ENCODE measurements at regions of chr6 and their contacts with region 1.

Region 1: DNA sequence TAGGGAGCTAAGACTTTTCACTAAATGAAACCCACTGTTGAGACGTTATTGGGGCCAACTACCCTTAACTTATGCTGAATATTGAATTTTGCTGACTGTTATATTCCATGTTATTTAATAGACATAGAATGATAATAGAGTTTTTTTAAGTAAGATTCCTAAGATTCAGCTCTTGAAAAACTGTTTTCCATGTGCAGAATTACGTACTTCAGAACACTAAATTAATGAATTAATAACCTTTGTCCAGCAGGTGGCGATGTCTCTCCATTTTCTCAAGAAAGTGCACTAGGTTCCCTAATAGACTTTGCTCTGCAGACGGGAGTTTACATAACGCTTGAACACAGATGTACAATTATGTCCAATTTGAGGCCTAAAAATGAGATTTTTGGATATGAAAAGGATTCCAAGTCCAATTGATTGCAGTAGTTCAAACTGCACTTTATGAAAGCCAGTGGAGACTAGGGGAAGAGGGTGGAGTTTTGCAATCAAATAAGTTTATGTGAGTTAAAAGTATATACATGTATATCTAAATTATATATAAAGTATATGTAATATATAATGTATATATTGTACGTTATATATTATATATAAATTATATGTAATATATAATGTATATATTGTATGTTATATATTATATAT is 282.1 kb downstream of the UST start:
- DNase-seq: peak; percentile 88
- H3K4me3 ChIP-seq: no peak overlapping the region
- H3K27ac ChIP-seq: no peak overlapping the region
- H3K4me1 ChIP-seq: peaks cover 16% of the 10 kb centered on the region
- H3K27me3 ChIP-seq: no peaks in the 10 kb centered on the region
- CTCF ChIP-seq: peak; percentile 67

Region 2: GRCh38 chr6:148530394-148530953 is 498.4 kb before region 1 on chr6:
- CTCF ChIA-PET with region 1: no interaction called
- POLR2A ChIA-PET with region 1: interaction called, 11 read pairs
- intact Hi-C with region 1: no loop called
- DNase-seq: peak; percentile 89
- H3K4me3 ChIP-seq: no peak overlapping the region
- H3K27ac ChIP-seq: peak overlapping the region; percentile 89
- H3K4me1 ChIP-seq: peaks cover 22% of the 10 kb centered on the region
- H3K27me3 ChIP-seq: no peaks in the 10 kb centered on the region
- CTCF ChIP-seq: no peak

Region 3: GRCh38 chr6:148578245-148578732 is 450.6 kb before region 1 on chr6:
- CTCF ChIA-PET with region 1: no interaction called
- POLR2A ChIA-PET with region 1: no interaction called
- intact Hi-C with region 1: loop called (anchors 1 kb)
- DNase-seq: peak; percentile 74
- H3K4me3 ChIP-seq: no peak overlapping the region
- H3K27ac ChIP-seq: no peak overlapping the region
- H3K4me1 ChIP-seq: no peaks in the 10 kb centered on the region
- H3K27me3 ChIP-seq: peaks cover 6% of the 10 kb centered on the region
- CTCF ChIP-seq: peak; percentile 87

Region 4: GRCh38 chr6:149380523-149380922 is 351.6 kb after region 1 on chr6:
- CTCF ChIA-PET with region 1: no interaction called
- POLR2A ChIA-PET with region 1: no interaction called
- intact Hi-C with region 1: no loop called
- DNase-seq: no peak
- H3K4me3 ChIP-seq: no peak overlapping the region
- H3K27ac ChIP-seq: no peak overlapping the region
- H3K4me1 ChIP-seq: peaks cover 6% of the 10 kb centered on the region
- H3K27me3 ChIP-seq: no peaks in the 10 kb centered on the region
- CTCF ChIP-seq: no peak

Region 5: DNA sequence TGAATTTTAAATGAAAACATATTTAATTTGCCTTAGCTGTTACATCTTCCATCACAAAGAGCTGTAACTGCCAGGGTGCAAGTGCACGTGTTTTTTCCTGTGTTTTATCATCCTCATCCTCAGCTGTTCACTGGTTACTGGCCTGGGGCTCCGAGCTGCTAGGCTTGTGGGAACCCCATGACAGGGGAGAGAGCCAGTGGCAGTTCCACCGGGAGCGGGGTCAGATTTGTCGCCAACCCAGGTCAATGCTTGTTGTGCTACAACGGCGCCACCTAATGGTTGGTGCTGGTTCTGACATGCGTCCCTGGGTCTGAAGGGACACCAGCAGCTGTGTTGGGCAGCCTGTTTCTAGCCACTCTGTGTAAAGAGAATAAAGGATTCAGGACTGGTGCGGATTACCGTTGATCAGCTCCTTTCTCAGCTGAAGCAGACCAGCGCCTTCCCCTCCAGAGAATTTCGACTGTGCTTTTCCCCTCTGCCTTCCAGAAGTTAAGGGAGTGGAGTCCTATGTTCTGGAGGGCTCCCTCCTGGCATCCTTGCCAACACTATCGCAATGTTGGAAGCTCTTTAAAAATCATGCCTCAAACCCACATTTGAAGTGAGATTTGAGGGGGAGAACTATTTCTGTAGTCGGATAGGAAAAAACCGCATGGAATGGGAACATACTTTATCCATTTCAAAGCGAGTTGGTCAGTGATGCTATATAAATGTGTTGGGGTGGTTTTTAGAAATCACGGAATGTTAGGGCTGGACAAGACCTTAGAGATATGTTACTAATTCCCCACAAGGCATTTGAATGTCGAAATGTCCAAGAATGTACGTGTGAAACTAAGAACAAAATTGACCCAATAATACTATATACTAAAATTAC is 403.3 kb after region 1 on chr6:
- CTCF ChIA-PET with region 1: interaction called, 7 read pairs
- POLR2A ChIA-PET with region 1: no interaction called
- intact Hi-C with region 1: loop called (anchors 1 kb)
- DNase-seq: peak; percentile 83
- H3K4me3 ChIP-seq: no peak overlapping the region
- H3K27ac ChIP-seq: no peak overlapping the region
- H3K4me1 ChIP-seq: no peaks in the 10 kb centered on the region
- H3K27me3 ChIP-seq: no peaks in the 10 kb centered on the region
- CTCF ChIP-seq: peak; percentile 94

Region 6: GRCh38 chr6:149513915-149514314 is 485.0 kb after region 1 on chr6:
- CTCF ChIA-PET with region 1: no interaction called
- POLR2A ChIA-PET with region 1: no interaction called
- intact Hi-C with region 1: loop called (anchors 2 kb)
- DNase-seq: no peak
- H3K4me3 ChIP-seq: no peak overlapping the region
- H3K27ac ChIP-seq: no peak overlapping the region
- H3K4me1 ChIP-seq: no peaks in the 10 kb centered on the region
- H3K27me3 ChIP-seq: no peaks in the 10 kb centered on the region
- CTCF ChIP-seq: no peak

Measured in A673 (cell line).